Heart left ventricle (tissue), 16 donors: ENCODE measurements at regions of chr1 and their contacts with region 1.

Region 1: DNA sequence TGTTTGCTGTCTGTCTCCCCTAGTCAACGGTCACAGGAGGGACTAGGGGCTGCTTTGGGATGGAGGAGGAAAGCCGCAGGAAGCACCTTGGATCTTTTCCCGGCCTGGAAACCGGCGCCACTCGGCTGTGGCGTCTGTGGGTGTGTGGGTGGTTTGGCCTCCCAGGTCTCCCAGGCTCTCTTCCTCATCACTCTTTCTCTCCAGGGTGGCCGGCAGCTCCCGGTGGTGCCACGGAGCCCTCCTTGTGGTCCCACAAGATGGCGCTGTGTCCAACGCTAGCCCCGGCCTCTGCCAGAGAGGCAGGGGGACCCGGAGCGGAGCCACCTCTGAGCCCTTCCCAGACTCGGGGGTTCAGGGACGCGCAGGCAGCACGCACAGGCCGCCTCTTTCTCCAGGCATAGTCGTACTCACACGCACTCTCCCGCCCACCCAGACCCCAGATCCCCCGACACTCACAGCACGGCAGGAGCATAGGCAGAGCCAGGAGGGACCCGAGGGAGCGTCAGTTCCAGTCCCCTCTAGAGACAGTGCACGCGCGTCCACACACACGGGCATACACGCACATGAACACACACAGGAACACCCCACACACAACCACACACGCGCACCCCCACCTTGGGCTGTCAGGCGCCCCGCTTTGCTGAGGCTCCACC is 31.2 kb downstream of the CDCP2 start:
- DNase-seq: peak; percentile 77 to 89 (median 82)
- ATAC-seq: peak; percentile 80 to 94 (median 88)
- H3K4me3 ChIP-seq: peak overlapping the region in 10 of 12 donors; percentile 17 to 44 (median 24)
- H3K27ac ChIP-seq: no peak overlapping the region
- H3K4me1 ChIP-seq: peaks cover 0 to 13% (median 8%) of the 10 kb centered on the region in 12 donors
- H3K27me3 ChIP-seq: peaks cover 0 to 4% (median 0%) of the 10 kb centered on the region in 9 donors
- CTCF ChIP-seq: peak; percentile 62 to 87 (median 77)
- POLR2A ChIP-seq: no peak

Region 2: DNA sequence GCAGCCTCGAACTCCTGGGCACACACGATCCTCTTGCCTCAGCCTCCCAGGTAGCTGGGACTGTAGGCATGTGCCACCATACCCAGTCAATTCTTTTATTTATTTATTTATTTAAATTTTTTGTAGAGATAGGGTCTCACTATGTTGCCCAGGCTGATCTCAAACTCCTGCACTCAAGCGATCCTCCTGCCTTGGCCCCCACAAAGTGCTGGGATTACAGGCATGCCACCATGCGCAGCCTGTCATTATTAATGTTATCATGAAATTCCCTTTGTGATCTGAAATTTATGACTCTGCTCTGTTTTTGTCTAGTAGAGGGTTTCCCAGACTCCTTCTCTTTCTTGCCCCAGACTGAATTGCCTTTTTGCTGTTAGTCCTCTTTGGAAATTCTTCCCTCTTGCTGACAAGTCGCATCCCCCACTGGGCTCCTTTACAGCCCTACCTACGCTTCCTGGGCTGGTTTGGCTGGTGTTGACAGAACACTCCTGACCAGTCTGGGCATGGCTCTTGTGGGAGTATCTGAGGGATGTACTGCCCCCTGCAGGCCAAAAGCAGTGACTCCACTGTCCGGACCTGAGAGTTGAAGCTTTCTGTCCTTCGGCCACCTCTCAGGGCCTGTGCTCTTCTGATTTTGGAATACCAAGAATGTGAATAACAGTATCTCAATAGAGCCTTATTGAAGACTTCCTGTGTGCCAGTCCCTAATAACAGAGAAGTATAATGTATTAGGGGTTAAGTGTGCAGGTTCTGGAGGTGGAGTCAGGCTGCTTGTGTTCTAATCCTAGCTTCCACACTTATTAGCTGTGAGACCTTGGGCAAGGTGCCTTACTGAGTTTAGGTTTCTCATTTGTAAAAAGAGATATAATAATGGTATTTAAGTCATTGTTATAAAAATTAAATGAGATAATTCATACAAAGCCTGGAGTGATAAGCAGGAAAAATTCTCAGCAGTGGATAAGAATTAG is 40.0 kb before region 1 on chr1:
- intact Hi-C with region 1: loop called in 1 of 10 experiments (anchors 2 kb)
- DNase-seq: peak; percentile 29 to 68 (median 44)
- ATAC-seq: peak in 3 of 4 donors; percentile 78 to 83 (median 78)
- H3K4me3 ChIP-seq: no peak overlapping the region
- H3K27ac ChIP-seq: no peak overlapping the region
- H3K4me1 ChIP-seq: peaks cover 0 to 5% (median 0%) of the 10 kb centered on the region in 12 donors
- H3K27me3 ChIP-seq: no peaks in the 10 kb centered on the region
- CTCF ChIP-seq: peak; percentile 31 to 68 (median 56)
- POLR2A ChIP-seq: no peak

Region 3: GRCh38 chr1:54413295-54413694 is 291.7 kb after region 1 on chr1:
- intact Hi-C with region 1: loop called in 8 of 10 experiments (anchors 5 to 10 kb)
- DNase-seq: peak in 4 of 5 donors; percentile 60 to 70 (median 61)
- ATAC-seq: peak; percentile 56 to 90 (median 62)
- H3K4me3 ChIP-seq: no peak overlapping the region
- H3K27ac ChIP-seq: peak overlapping the region in 9 of 12 donors; percentile 9 to 62 (median 43)
- H3K4me1 ChIP-seq: peaks cover 0 to 32% (median 9%) of the 10 kb centered on the region in 12 donors
- H3K27me3 ChIP-seq: no peaks in the 10 kb centered on the region
- CTCF ChIP-seq: no peak
- POLR2A ChIP-seq: no peak